Activated CD4-positive, alpha-beta T cell treated with anti-CD3 and anti-CD28 coated beads, Interleukin-2, amount 10 ng/mL, durations not matched to agents 24 days and 14 days (primary cell): ENCODE measurements at regions of chr17 and their contacts with region 1.

Region 1: DNA sequence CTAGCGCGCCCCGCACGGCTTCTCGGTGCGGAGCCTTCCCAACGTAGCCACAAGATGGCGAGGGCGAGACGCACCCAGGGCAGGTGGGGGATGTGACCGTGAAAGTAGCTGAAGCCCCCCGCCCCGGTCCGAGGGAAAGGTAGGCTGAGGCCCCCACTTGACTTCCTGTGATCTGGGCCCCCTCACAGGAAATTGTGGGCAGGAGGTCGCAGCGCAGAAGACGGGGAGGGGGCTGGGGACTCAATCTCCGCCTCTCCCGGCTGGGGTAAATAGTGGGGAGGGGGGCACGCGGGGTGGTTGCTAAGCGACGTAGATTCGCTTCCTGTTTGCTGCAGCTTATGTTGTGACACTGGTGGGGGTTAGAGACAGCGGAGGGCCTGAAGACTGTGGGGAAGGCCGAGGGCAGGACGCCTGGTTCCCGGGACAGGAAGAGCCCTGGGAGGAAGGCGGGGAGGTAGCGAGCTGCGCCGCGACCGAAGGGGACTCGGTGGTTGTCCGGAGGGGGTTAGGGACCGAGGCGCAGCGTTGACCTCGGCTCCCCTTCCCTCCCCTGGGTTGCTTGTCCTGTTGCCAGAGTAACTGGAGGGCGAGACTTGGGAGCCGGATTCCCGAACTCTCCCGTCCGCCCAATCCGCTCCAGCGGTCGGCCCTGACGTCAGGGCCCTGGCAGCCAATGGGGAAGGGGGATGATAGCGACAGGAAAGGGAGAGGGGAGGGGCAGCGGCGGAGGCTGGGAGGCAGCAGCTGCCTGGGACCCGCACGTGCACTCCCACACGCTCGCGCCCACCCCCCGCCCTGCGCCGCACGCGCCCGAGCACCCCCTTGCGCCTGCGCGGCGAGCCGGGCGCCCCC is 1.2 kb downstream of the KDM6B start:
- DNase-seq: peak; percentile 94
- H3K4me3 Mint-ChIP-seq: peak overlapping the region; percentile 87
- H3K27ac Mint-ChIP-seq: peak overlapping the region; percentile 95
- H3K4me1 Mint-ChIP-seq: peaks cover 50% of the 10 kb centered on the region
- H3K27me3 Mint-ChIP-seq: peaks cover 17% of the 10 kb centered on the region

Region 2: GRCh38 chr17:7572588-7573323 is 262.4 kb before region 1 on chr17:
- intact Hi-C with region 1: loop called (anchors 10 kb)
- DNase-seq: peak; percentile 100
- H3K4me3 Mint-ChIP-seq: peak overlapping the region; percentile 95
- H3K27ac Mint-ChIP-seq: peak overlapping the region; percentile 100
- H3K4me1 Mint-ChIP-seq: peaks cover 55% of the 10 kb centered on the region
- H3K27me3 Mint-ChIP-seq: peaks cover 2% of the 10 kb centered on the region